PC-9 (cell line): ENCODE measurements at regions of chr14 and their contacts with region 1.

Region 1: GRCh38 chr14:102900631-102901571 is 21.6 kb upstream of the AMN start:
- DNase-seq: no peak
- H3K4me3 ChIP-seq: no peak overlapping the region
- H3K27ac ChIP-seq: no peak overlapping the region
- H3K4me1 ChIP-seq: no peaks in the 10 kb centered on the region
- H3K27me3 ChIP-seq: no peaks in the 10 kb centered on the region
- CTCF ChIP-seq: no peak

Region 2: DNA sequence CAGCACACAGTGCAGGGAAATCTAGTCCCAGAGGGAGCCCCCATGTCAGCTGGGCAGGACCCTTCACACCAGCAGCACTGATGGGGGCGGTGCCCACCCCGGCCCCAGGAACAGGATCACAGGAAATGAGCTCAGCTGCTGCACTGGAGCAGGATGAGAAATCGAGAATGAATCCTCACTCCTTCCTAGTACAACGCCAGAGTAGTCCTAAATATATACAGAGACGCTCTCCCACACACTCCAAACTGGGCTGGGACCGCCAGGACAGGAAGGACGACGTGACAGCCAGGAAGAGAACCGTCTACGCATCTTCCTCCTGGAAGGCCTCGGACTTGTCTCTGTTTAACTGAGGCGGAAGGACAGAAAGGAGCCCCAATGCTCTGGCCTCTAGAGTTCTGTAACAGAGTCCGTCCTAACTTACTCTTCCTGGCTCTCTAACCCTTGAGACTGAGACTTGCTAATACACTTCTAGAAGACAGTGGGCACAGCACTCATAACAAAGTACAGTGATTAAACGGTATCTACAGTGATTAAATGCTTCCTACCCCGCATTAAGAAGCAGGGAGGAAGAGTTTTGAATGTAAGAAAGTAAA is 123.1 kb after region 1 on chr14:
- CTCF ChIA-PET with region 1: no interaction called
- POLR2A ChIA-PET with region 1: no interaction called
- intact Hi-C with region 1: no loop called
- DNase-seq: no peak
- H3K4me3 ChIP-seq: no peak overlapping the region
- H3K27ac ChIP-seq: peak overlapping the region; percentile 89
- H3K4me1 ChIP-seq: peaks cover 63% of the 10 kb centered on the region
- H3K27me3 ChIP-seq: no peaks in the 10 kb centered on the region
- CTCF ChIP-seq: no peak

Region 3: GRCh38 chr14:103045371-103045869 is 144.5 kb after region 1 on chr14:
- CTCF ChIA-PET with region 1: interaction called, 10 read pairs
- POLR2A ChIA-PET with region 1: no interaction called
- intact Hi-C with region 1: no loop called
- DNase-seq: no peak
- H3K4me3 ChIP-seq: no peak overlapping the region
- H3K27ac ChIP-seq: no peak overlapping the region
- H3K4me1 ChIP-seq: peaks cover 8% of the 10 kb centered on the region; the same call in 1 of the 2 replicates
- H3K27me3 ChIP-seq: no peaks in the 10 kb centered on the region
- CTCF ChIP-seq: no peak

Region 4: GRCh38 chr14:103104654-103105452 is 204.0 kb after region 1 on chr14:
- CTCF ChIA-PET with region 1: no interaction called
- POLR2A ChIA-PET with region 1: no interaction called
- intact Hi-C with region 1: no loop called
- DNase-seq: peak; percentile 76 to 93
- H3K4me3 ChIP-seq: peak overlapping the region; percentile 54; the same call in 1 of the 2 replicates
- H3K27ac ChIP-seq: no peak overlapping the region
- H3K4me1 ChIP-seq: peaks cover 68% of the 10 kb centered on the region
- H3K27me3 ChIP-seq: no peaks in the 10 kb centered on the region
- CTCF ChIP-seq: peak; percentile 100